Heart left ventricle (tissue), 16 donors: ENCODE measurements at regions of chrX and their contacts with region 1.

Region 1: DNA sequence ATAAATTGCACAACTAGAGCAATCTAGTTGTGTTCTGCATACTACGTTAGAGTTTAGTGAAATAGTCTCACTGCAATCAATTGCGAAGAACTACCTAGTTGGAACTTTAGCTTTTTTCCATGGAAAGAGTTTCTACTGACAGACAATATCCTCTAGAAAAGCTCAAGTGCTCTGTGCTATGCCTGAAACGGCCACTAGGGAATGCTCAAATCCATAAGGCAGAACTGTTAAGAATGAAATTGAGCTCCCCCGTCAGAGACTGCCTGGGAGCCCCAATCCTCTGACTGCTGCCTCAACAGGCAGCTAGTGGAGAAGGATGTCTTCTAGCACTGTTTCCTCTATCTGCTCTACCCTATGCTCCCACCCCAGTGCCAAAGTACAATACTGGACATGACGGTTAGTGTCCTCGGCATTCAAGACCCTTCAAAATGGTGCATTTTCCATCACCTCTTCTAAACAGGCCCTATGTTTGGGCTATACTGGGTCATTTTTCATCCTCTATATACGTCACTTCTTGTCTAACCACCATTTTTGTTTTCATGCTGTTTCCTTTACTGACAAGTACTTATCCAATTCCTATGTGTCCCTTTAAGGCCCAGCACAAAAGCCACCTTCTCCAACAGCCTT is 35.3 kb downstream of the FRMD7 start:
- DNase-seq: peak in 4 of 5 donors; percentile 23 to 33 (median 30)
- ATAC-seq: peak in 3 of 4 donors; percentile 55 to 78 (median 67)
- H3K4me3 ChIP-seq: no peak overlapping the region
- H3K27ac ChIP-seq: no peak overlapping the region
- H3K4me1 ChIP-seq: no peaks in the 10 kb centered on the region
- H3K27me3 ChIP-seq: peaks cover 0 to 38% (median 0%) of the 10 kb centered on the region in 9 donors
- CTCF ChIP-seq: peak; percentile 57 to 79 (median 70)
- POLR2A ChIP-seq: no peak

Region 2: GRCh38 chrX:132219343-132219768 is 126.8 kb after region 1 on chrX and contains the start of gene RAP2C:
- intact Hi-C with region 1: loop called in 8 of 10 experiments (anchors 5 to 10 kb)
- DNase-seq: peak; percentile 64 to 87 (median 79)
- ATAC-seq: peak; percentile 86 to 90 (median 87)
- H3K4me3 ChIP-seq: peak within 1 kb of the TSS; percentile 40 to 98 (median 80)
- H3K27ac ChIP-seq: peak within 1 kb of the TSS; percentile 88 to 99 (median 96)
- H3K4me1 ChIP-seq: peaks cover 0 to 26% (median 10%) of the 10 kb centered on the region in 12 donors
- H3K27me3 ChIP-seq: peaks cover 0 to 13% (median 0%) of the 10 kb centered on the region in 9 donors
- CTCF ChIP-seq: peak; percentile 37 to 71 (median 54)
- POLR2A ChIP-seq: no peak
- total RNA-seq, gene RAP2C: 8.2 to 23.6 (median 16.7) TPM

Region 3: GRCh38 chrX:132226169-132226568 is 133.6 kb after region 1 on chrX:
- intact Hi-C with region 1: loop called in 3 of 10 experiments (anchors 5 to 10 kb)
- DNase-seq: no peak
- ATAC-seq: no peak
- H3K4me3 ChIP-seq: no peak overlapping the region
- H3K27ac ChIP-seq: no peak overlapping the region
- H3K4me1 ChIP-seq: no peaks in the 10 kb centered on the region
- H3K27me3 ChIP-seq: peaks cover 0 to 21% (median 0%) of the 10 kb centered on the region in 9 donors
- CTCF ChIP-seq: peak in 8 of 12 donors; percentile 11 to 38 (median 28)
- POLR2A ChIP-seq: no peak

Region 4: DNA sequence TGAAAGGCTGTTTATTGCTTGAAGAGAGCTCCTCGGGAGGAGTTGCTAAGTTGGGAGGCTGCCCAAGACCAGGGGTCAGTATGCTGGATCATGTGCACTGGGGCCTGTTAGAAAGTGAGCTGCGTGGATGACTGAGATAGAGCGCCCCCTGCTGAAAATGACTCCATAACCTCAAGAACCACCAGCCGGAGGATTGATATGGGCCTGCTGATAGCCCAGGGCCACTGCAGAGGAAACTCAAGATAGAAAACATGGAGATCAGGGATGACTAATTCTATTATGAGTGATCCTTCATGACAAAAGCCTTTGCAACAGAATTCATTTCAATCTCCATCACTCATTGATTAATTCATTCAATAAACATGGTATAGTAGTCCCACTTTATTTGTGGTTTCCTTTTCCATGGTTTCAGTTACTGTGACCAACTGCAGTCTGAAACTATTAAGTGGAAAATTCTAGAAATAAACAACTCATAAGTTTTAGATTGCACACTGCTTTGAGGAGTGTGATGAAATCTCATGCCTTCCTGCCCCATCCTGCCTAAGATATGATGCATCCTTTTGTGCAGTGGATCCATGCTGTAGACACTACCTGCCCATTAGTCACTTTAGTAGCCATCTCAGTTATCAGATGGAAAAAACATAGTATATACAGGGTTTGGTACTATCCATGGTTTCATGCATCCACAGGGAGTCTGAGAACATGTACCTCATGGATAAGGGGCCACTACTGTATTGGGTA is 523.0 kb after region 1 on chrX:
- intact Hi-C with region 1: loop called in 8 of 10 experiments (anchors 5 to 10 kb)
- DNase-seq: peak in 3 of 5 donors; percentile 8 to 40 (median 19)
- ATAC-seq: no peak
- H3K4me3 ChIP-seq: no peak overlapping the region
- H3K27ac ChIP-seq: no peak overlapping the region
- H3K4me1 ChIP-seq: no peaks in the 10 kb centered on the region
- H3K27me3 ChIP-seq: peaks cover 0 to 32% (median 0%) of the 10 kb centered on the region in 9 donors
- CTCF ChIP-seq: peak; percentile 5 to 48 (median 34)
- POLR2A ChIP-seq: no peak

Region 5: DNA sequence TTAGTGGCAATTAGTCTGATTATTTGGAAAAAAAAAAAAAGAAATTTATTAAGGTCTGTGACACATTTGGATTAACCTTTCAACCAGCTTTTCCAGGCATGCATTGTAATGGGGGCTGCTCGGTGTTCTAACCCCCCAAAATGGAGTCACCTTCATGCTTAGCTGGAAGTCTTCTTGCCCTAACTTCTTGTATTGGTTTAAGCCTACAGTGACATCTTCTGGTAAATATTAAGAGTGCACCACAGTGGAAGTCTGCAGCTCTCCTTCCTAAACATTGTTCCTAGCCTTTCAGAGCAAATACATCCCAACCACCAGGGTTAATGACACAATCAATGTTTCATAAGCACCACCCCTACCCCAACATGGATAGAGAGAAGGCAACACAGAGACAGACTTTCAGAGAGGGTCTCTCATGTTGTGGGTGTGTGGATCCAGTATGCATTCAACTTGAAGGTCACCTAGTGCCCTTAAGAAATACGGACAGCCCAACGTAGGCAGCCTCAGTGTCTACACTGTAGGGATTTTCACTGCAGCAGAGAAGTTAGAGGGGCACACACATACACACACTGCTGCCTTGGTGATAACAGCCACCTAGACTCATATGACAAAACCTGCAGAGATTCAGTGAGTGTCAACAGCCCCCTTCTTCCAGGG is 539.2 kb after region 1 on chrX:
- intact Hi-C with region 1: loop called in 1 of 10 experiments (anchors 5 kb)
- DNase-seq: no peak
- ATAC-seq: peak in 2 of 4 donors; percentile 49 to 58
- H3K4me3 ChIP-seq: no peak overlapping the region
- H3K27ac ChIP-seq: no peak overlapping the region
- H3K4me1 ChIP-seq: no peaks in the 10 kb centered on the region
- H3K27me3 ChIP-seq: peaks cover 0 to 7% (median 0%) of the 10 kb centered on the region in 9 donors
- CTCF ChIP-seq: peak in 11 of 12 donors; percentile 26 to 55 (median 46)
- POLR2A ChIP-seq: no peak